K562 (cell line): ENCODE measurements at regions of chr2 and their contacts with region 1.

Region 1: GRCh38 chr2:42770288-42771131 is 6.6 kb upstream of the OXER1 start:
- DNase-seq: peak; percentile 85 to 88 (median 86)
- ATAC-seq: peak; percentile 99
- H3K4me3 ChIP-seq: no peak overlapping the region
- H3K27ac ChIP-seq: no peak overlapping the region
- H3K4me1 ChIP-seq: peaks cover 0 to 13% of the 10 kb centered on the region in 2 experiments; a peak in 2 of 5 replicates
- H3K27me3 ChIP-seq: no peaks in the 10 kb centered on the region
- CTCF ChIP-seq: peak; percentile 94 to 100 (median 99)
- EP300 ChIP-seq: no peak
- POLR2A ChIP-seq: no peak
- RAD21 ChIP-seq: peak; percentile 68 to 89

Region 2: GRCh38 chr2:42494355-42495233 is 275.9 kb before region 1 on chr2:
- CTCF ChIA-PET with region 1: interaction called, 6 read pairs
- POLR2A ChIA-PET with region 1: no interaction called
- in situ Hi-C with region 1: no loop called
- intact Hi-C with region 1: loop called (anchors 2 kb)
- DNase-seq: peak; percentile 62 to 77 (median 69)
- ATAC-seq: peak; percentile 91
- H3K4me3 ChIP-seq: peak overlapping the region; percentile 36
- H3K27ac ChIP-seq: no peak overlapping the region
- H3K4me1 ChIP-seq: peaks cover 0 to 17% of the 10 kb centered on the region in 2 experiments; a peak in 2 of 5 replicates
- H3K27me3 ChIP-seq: peaks cover 11 to 19% of the 10 kb centered on the region in 2 experiments; a peak in 4 of 5 replicates
- CTCF ChIP-seq: peak; percentile 79 to 89 (median 89)
- EP300 ChIP-seq: no peak
- POLR2A ChIP-seq: no peak
- RAD21 ChIP-seq: peak; percentile 66 to 71

Region 3: GRCh38 chr2:42513257-42513918 is 257.1 kb before region 1 on chr2:
- CTCF ChIA-PET with region 1: interaction called, 3 read pairs
- POLR2A ChIA-PET with region 1: no interaction called
- in situ Hi-C with region 1: loop called (anchors 25 kb)
- intact Hi-C with region 1: loop called (anchors 1 kb)
- DNase-seq: peak; percentile 54 to 65 (median 57)
- ATAC-seq: peak; percentile 89
- H3K4me3 ChIP-seq: no peak overlapping the region
- H3K27ac ChIP-seq: no peak overlapping the region
- H3K4me1 ChIP-seq: no peaks in the 10 kb centered on the region
- H3K27me3 ChIP-seq: peaks cover 6 to 10% of the 10 kb centered on the region in 2 experiments; a peak in 4 of 5 replicates
- CTCF ChIP-seq: peak; percentile 65 to 82 (median 71)
- EP300 ChIP-seq: no peak
- POLR2A ChIP-seq: no peak
- RAD21 ChIP-seq: peak; percentile 48 to 77

Region 4: GRCh38 chr2:43879261-43879660 is 1108.8 kb after region 1 on chr2:
- CTCF ChIA-PET with region 1: no interaction called
- POLR2A ChIA-PET with region 1: no interaction called
- in situ Hi-C with region 1: no loop called
- intact Hi-C with region 1: no loop called
- DNase-seq: no peak
- ATAC-seq: no peak
- H3K4me3 ChIP-seq: no peak overlapping the region
- H3K27ac ChIP-seq: no peak overlapping the region
- H3K4me1 ChIP-seq: no peaks in the 10 kb centered on the region
- H3K27me3 ChIP-seq: peaks cover 9 to 30% of the 10 kb centered on the region in 2 experiments; a peak in 4 of 5 replicates
- CTCF ChIP-seq: no peak
- EP300 ChIP-seq: no peak
- POLR2A ChIP-seq: no peak
- RAD21 ChIP-seq: no peak